ENCODE measurements at regions of chr2 and their contacts with region 1.

Region 1: DNA sequence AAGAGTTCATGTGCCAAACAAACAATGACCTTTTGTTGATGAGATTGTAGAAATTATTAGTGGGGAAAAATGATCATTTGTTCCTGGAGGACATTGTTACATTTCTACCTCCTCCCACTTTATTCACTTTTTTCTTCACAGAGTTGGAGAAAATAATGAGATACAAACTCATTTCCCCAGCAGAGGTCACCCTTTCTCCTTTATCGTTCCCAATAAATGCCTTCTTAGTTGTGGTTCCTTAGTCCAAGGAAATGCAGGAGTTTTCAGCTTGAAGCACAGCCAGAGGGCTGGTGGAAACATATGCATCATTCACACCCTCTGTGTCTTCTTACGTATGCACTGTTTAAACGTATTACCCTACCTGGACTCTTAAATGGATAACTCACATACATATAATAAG is 108.8 kb downstream of the SLC4A3 start:
- DNase-seq: peak in 1 of 2 experiments; percentile 63
- H3K4me3 ChIP-seq: no peak overlapping the region
- H3K4me3 Mint-ChIP-seq: no peak overlapping the region
- H3K27ac Mint-ChIP-seq: no peak overlapping the region
- H3K4me1 ChIP-seq: no peaks in the 10 kb centered on the region
- H3K4me1 Mint-ChIP-seq: no peaks in the 10 kb centered on the region
- H3K27me3 ChIP-seq: no peaks in the 10 kb centered on the region; the same call in 1 of the 2 replicates
- H3K27me3 Mint-ChIP-seq: peaks cover 21% of the 10 kb centered on the region
- CTCF ChIP-seq: peak; percentile 40 to 65

Region 2: GRCh38 chr2:219836647-219837177 is 100.5 kb after region 1 on chr2:
- CTCF ChIA-PET with region 1: interaction called, 7 read pairs
- POLR2A ChIA-PET with region 1: no interaction called
- intact Hi-C with region 1: loop called (anchors 1 kb)
- DNase-seq: peak in 1 of 2 experiments; percentile 33
- H3K4me3 ChIP-seq: no peak overlapping the region
- H3K4me3 Mint-ChIP-seq: no peak overlapping the region
- H3K27ac Mint-ChIP-seq: no peak overlapping the region
- H3K4me1 ChIP-seq: no peaks in the 10 kb centered on the region
- H3K4me1 Mint-ChIP-seq: no peaks in the 10 kb centered on the region
- H3K27me3 ChIP-seq: 0 out of 2 replicates have a peak, but pooled peaks cover 2% of the 10 kb centered on the region
- H3K27me3 Mint-ChIP-seq: peaks cover 22% of the 10 kb centered on the region
- CTCF ChIP-seq: peak; percentile 41 to 64

Region 3: GRCh38 chr2:219998107-219998506 is 261.9 kb after region 1 on chr2:
- CTCF ChIA-PET with region 1: no interaction called
- POLR2A ChIA-PET with region 1: no interaction called
- intact Hi-C with region 1: loop called (anchors 2 kb)
- DNase-seq: peak in 1 of 2 experiments; percentile 4
- H3K4me3 ChIP-seq: no peak overlapping the region
- H3K4me3 Mint-ChIP-seq: no peak overlapping the region
- H3K27ac Mint-ChIP-seq: no peak overlapping the region
- H3K4me1 ChIP-seq: 0 out of 2 replicates have a peak, but pooled peaks cover 9% of the 10 kb centered on the region
- H3K4me1 Mint-ChIP-seq: peaks cover 19% of the 10 kb centered on the region
- H3K27me3 ChIP-seq: no peaks in the 10 kb centered on the region; the same call in none of the 2 replicates
- H3K27me3 Mint-ChIP-seq: peaks cover 10% of the 10 kb centered on the region
- CTCF ChIP-seq: peak in 1 of 2 experiments; percentile 6